HepG2 (cell line): ENCODE measurements at regions of chr19 and their contacts with region 1.

Region 1: DNA sequence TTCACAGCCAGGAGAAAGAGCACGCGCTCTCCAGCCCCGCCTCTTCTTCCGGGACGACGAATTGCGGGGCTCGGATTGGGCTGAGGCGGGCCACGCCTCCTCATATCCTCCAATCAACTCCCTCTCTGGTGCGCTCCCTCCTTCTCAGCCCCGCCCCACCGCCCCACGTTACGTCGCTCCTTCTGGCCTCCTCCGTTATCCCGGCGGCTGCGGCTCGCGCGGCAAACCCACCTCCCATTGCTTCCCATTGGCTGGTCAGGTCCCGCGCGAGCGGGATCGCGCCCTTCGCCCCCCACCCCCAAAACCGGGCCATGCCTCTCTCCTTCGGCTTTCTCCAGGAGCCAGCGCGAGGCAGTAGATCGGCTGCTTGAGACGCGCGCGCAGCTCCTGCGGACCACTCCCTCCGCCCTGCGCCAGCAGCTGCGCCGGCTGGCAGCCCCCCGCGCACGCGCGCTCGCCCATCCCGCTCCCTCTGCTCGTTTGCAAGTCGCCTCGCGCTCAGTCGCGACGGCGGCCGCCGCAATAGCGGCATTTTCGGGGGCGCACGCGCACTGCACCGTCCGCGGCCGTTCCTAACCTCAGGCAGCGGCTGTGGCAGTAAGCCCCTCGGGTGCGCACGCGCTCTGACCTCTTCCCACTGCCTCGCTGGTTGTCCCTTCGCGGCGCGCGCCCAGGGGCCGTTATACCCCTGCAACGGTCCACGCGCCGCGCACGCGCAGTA is 512 bp upstream of the ARHGAP35 start:
- DNase-seq: peak; percentile 96
- ATAC-seq: peak; percentile 74
- H3K4me3 ChIP-seq: peak overlapping the region; percentile 67 to 83 (median 70); a peak in 5 of 6 replicates
- H3K27ac ChIP-seq: peak overlapping the region; percentile 100
- H3K4me1 ChIP-seq: peaks cover 62% of the 10 kb centered on the region
- H3K27me3 ChIP-seq: no peaks in the 10 kb centered on the region; a peak in 1 of 5 replicates
- CTCF ChIP-seq: 0 out of 2 replicates have a peak, but pooled peaks have one; percentile 16
- EP300 ChIP-seq: no peak; a peak in 1 of 4 replicates
- POLR2A ChIP-seq: peak; percentile 85 to 95
- RAD21 ChIP-seq: peak; percentile 79

Region 2: GRCh38 chr19:46840136-46840942 is 19.9 kb before region 1 on chr19:
- CTCF ChIA-PET with region 1: no interaction called
- POLR2A ChIA-PET with region 1: no interaction called
- in situ Hi-C with region 1: no loop called
- intact Hi-C with region 1: no loop called
- DNase-seq: peak; percentile 63
- ATAC-seq: peak; percentile 65
- H3K4me3 ChIP-seq: no peak overlapping the region
- H3K27ac ChIP-seq: no peak overlapping the region
- H3K4me1 ChIP-seq: peaks cover 31% of the 10 kb centered on the region
- H3K27me3 ChIP-seq: no peaks in the 10 kb centered on the region
- CTCF ChIP-seq: peak; percentile 92
- EP300 ChIP-seq: no peak
- POLR2A ChIP-seq: no peak
- RAD21 ChIP-seq: peak; percentile 86

Region 3: GRCh38 chr19:46890423-46891170 is 30.3 kb after region 1 on chr19:
- CTCF ChIA-PET with region 1: no interaction called
- POLR2A ChIA-PET with region 1: interaction called, 25 read pairs
- in situ Hi-C with region 1: no loop called
- intact Hi-C with region 1: loop called (anchors 2 kb)
- DNase-seq: peak; percentile 99
- ATAC-seq: peak; percentile 97
- H3K4me3 ChIP-seq: peak overlapping the region in 2 of 3 experiments; percentile 8 to 42; a peak in 1 of 6 replicates
- H3K27ac ChIP-seq: peak overlapping the region; percentile 85
- H3K4me1 ChIP-seq: peaks cover 84% of the 10 kb centered on the region
- H3K27me3 ChIP-seq: no peaks in the 10 kb centered on the region
- CTCF ChIP-seq: peak; percentile 53
- EP300 ChIP-seq: peak; percentile 72 to 91; a peak in 3 of 4 replicates
- POLR2A ChIP-seq: peak; percentile 25 to 40; a peak in 2 of 4 replicates
- RAD21 ChIP-seq: peak; percentile 67

Region 4: GRCh38 chr19:46984077-46985010 is 124.1 kb after region 1 on chr19:
- CTCF ChIA-PET with region 1: interaction called, 3 read pairs
- POLR2A ChIA-PET with region 1: interaction called, 11 read pairs
- in situ Hi-C with region 1: no loop called
- intact Hi-C with region 1: loop called (anchors 1 kb)
- DNase-seq: peak; percentile 90
- ATAC-seq: peak; percentile 88
- H3K4me3 ChIP-seq: peak overlapping the region in 2 of 3 experiments; percentile 8 to 52; a peak in 3 of 6 replicates
- H3K27ac ChIP-seq: peak overlapping the region; percentile 79
- H3K4me1 ChIP-seq: peaks cover 35% of the 10 kb centered on the region
- H3K27me3 ChIP-seq: no peaks in the 10 kb centered on the region
- CTCF ChIP-seq: peak; percentile 16; the same call in 1 of the 2 replicates
- EP300 ChIP-seq: peak in 1 of 2 experiments; percentile 81; a peak in 2 of 4 replicates
- POLR2A ChIP-seq: peak in 1 of 2 experiments; percentile 51; a peak in 1 of 4 replicates
- RAD21 ChIP-seq: 0 out of 2 replicates have a peak, but pooled peaks have one; percentile 34

Region 5: DNA sequence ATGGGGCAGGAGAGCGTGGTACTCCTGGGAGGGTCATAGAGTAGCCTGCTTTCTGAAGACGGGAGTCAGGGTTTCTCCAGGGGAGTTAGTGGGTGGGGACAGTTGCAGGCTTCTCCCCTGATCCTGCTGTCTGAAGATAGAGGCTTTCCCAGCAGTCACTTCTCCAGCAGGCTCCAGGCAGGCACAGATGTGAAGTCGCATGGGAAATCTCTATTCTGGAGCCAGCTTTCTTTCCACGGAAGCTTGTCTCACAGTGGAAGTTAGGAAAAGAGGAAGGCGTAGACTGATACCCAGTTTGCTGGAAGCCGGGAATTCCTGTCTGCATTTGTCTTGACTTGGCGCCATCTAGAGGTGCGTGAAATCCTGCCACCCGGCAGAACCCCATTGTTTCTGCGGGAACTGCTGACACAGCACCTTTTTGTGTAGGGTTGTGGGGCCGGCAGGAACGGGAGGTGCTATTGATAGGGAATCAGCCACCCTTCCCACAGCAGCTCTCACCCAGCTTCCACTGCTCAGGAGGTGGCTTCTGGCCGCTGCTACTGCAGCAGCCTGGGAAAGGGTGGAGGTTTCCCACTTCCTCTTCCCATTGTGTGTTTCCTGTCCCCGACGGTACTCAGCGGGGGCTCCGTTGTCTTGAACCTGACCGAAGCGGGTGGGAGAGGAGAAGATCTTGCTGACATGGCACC is 130.8 kb after region 1 on chr19:
- CTCF ChIA-PET with region 1: interaction called, 15 read pairs
- POLR2A ChIA-PET with region 1: interaction called, 5 read pairs
- in situ Hi-C with region 1: loop called (anchors 5 kb)
- intact Hi-C with region 1: no loop called
- DNase-seq: peak; percentile 64
- ATAC-seq: peak; percentile 64
- H3K4me3 ChIP-seq: no peak overlapping the region
- H3K27ac ChIP-seq: no peak overlapping the region
- H3K4me1 ChIP-seq: peaks cover 3% of the 10 kb centered on the region
- H3K27me3 ChIP-seq: no peaks in the 10 kb centered on the region
- CTCF ChIP-seq: peak; percentile 87
- EP300 ChIP-seq: no peak
- POLR2A ChIP-seq: no peak
- RAD21 ChIP-seq: peak; percentile 90